Activated T-helper 1 cell treated with anti-CD3 and anti-CD28 coated beads, Interleukin-12 subunit alpha, Interleukin-12 subunit beta, Interleukin-2, Interleukin-4 antibody, amounts not matched to agents 30 ng/mL and 10 ng/mL and 1 ng/mL, durations not matched to agents 14 hours and 24 hours and 36 hours (primary cell): ENCODE measurements at regions of chr3 and their contacts with region 1.

Region 1: GRCh38 chr3:146065573-146066006 is 95.4 kb downstream of the PLOD2 start:
- DNase-seq: no peak
- H3K4me3 Mint-ChIP-seq: no peak overlapping the region
- H3K27ac Mint-ChIP-seq: no peak overlapping the region
- H3K4me1 Mint-ChIP-seq: no peaks in the 10 kb centered on the region
- H3K27me3 Mint-ChIP-seq: no peaks in the 10 kb centered on the region

Region 2: DNA sequence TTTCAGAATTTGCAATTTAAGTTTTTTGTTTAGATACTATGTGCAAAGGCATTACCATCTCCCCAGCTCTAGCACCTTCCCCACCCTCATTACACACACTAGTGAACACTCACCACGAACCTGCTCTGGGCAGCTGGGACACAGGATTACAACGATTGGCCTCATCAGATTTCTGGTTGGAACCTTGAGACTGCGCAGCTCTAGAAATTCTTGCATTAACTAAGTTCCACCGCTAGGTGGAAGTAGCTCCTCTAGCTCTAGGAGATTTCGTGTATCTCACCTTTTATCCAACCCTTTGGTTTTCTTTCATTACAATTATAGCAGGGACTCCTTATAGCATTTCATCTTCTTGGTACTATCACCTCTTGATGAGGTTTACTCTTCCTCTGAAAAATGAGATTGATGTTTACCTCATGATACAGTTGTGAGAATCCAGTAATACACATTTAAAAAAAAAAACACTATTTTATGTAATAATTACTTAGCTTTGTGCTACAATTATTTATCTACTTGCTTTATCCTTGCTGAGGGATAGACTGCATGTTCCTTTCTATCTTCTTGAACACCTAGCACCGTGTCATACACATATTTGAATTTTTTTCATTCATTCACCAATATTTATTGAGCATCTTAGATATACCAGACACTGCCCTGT is 124.1 kb after region 1 on chr3:
- intact Hi-C with region 1: loop called (anchors 2 kb)
- DNase-seq: no peak
- H3K4me3 Mint-ChIP-seq: no peak overlapping the region
- H3K27ac Mint-ChIP-seq: no peak overlapping the region
- H3K4me1 Mint-ChIP-seq: no peaks in the 10 kb centered on the region
- H3K27me3 Mint-ChIP-seq: peaks cover 13% of the 10 kb centered on the region

Region 3: GRCh38 chr3:147191795-147192385 is 1126.3 kb after region 1 on chr3:
- intact Hi-C with region 1: loop called (anchors 5 kb)
- DNase-seq: no peak
- H3K4me3 Mint-ChIP-seq: no peak overlapping the region
- H3K27ac Mint-ChIP-seq: no peak overlapping the region
- H3K4me1 Mint-ChIP-seq: no peaks in the 10 kb centered on the region
- H3K27me3 Mint-ChIP-seq: no peaks in the 10 kb centered on the region